ENCODE measurements at regions of chr13 and their contacts with region 1.

Region 1: DNA sequence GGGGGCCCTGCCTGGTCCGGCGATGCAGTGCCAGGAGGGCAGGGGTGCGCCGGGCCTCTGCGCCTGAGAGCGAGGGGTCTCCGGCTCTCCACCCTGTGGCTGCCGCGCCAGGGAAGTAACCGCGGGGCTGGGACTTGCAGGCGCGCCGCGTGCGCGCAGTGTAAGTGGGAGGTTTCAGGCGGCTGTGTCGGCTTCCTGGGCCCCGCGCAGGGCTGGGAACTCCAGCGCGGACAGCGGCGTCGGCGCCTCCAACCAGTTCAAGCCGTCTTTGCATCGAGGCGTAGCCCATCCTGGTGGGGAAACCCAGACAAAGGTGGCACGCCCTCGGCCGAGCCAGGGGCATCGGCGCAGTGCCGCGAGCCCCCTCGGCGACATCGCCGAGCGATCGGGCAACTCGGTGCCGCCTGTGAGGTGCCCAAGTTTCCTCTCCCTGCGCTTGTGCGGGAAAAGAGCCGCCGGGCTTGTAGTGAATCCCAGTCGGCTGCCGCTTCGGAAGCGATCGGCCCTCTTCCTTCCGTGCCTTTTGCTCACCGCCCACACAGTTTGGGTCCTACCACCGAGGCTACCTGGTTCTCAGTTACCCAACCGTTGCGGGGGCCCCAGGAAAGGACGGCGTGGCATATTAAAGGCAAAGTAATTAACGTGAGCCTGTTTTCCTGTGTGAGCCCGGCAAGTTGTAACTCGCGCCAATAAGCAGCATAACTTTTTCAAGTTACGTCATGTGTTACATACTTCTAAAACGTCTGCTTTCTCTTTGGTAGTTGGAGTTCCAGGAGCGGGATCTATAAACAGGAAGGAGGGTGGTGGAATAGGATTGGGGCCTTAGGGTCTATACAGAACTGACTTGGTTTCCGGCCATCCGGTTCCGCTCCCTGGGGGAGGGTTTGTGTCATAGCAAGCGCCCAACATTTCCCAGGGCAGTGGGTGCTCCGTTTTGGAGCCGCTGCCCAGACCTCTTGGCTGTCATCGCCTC is 1.2 kb downstream of the LRCH1 start:
- DNase-seq: peak; percentile 63
- H3K4me3 Mint-ChIP-seq: peak overlapping the region; percentile 91
- H3K27ac Mint-ChIP-seq: peak overlapping the region; percentile 68
- H3K4me1 Mint-ChIP-seq: peaks cover 40% of the 10 kb centered on the region
- H3K27me3 Mint-ChIP-seq: peaks cover 4% of the 10 kb centered on the region

Region 2: GRCh38 chr13:45149964-45150363 is 1404.2 kb before region 1 on chr13:
- intact Hi-C with region 1: no loop called
- DNase-seq: no peak
- H3K4me3 Mint-ChIP-seq: no peak overlapping the region
- H3K27ac Mint-ChIP-seq: no peak overlapping the region
- H3K4me1 Mint-ChIP-seq: peaks cover 10% of the 10 kb centered on the region
- H3K27me3 Mint-ChIP-seq: no peaks in the 10 kb centered on the region

Region 3: GRCh38 chr13:46577696-46578589 is 23.8 kb after region 1 on chr13:
- intact Hi-C with region 1: loop called (anchors 2 kb)
- DNase-seq: no peak
- H3K4me3 Mint-ChIP-seq: no peak overlapping the region
- H3K27ac Mint-ChIP-seq: peak overlapping the region; percentile 10
- H3K4me1 Mint-ChIP-seq: peaks cover 53% of the 10 kb centered on the region
- H3K27me3 Mint-ChIP-seq: no peaks in the 10 kb centered on the region

Region 4: GRCh38 chr13:46668302-46668720 is 114.1 kb after region 1 on chr13:
- intact Hi-C with region 1: loop called (anchors 2 kb)
- DNase-seq: no peak
- H3K4me3 Mint-ChIP-seq: peak overlapping the region; percentile 68
- H3K27ac Mint-ChIP-seq: peak overlapping the region; percentile 71
- H3K4me1 Mint-ChIP-seq: peaks cover 36% of the 10 kb centered on the region
- H3K27me3 Mint-ChIP-seq: no peaks in the 10 kb centered on the region

Region 5: DNA sequence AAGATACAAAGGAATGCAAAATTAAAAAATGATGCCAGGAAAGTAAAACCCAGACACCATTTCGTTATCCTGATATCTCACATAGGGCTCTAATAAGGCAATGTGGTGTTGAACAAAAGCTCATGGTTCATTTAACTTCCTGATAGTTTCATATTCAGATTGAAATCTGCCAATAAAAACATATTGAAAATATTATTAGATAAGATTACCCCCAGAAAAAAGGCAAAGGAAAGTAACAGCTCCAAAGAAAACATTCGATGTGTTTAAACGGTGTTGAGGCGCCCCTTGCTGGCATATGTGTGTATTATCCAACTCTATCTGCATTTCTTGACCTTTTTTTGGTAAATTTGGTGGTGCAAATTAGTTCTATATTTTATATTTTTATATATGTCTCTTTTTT is 166.9 kb after region 1 on chr13:
- intact Hi-C with region 1: loop called (anchors 1 kb)
- DNase-seq: no peak
- H3K4me3 Mint-ChIP-seq: no peak overlapping the region
- H3K27ac Mint-ChIP-seq: no peak overlapping the region
- H3K4me1 Mint-ChIP-seq: peaks cover 15% of the 10 kb centered on the region
- H3K27me3 Mint-ChIP-seq: no peaks in the 10 kb centered on the region

Region 6: GRCh38 chr13:46796515-46797474 is 242.6 kb after region 1 on chr13 and contains the start of gene ESD:
- intact Hi-C with region 1: loop called (anchors 2 kb)
- DNase-seq: peak; percentile 84
- H3K4me3 Mint-ChIP-seq: peak within 1 kb of the TSS; percentile 93
- H3K27ac Mint-ChIP-seq: peak within 1 kb of the TSS; percentile 94
- H3K4me1 Mint-ChIP-seq: peaks cover 31% of the 10 kb centered on the region
- H3K27me3 Mint-ChIP-seq: peaks cover 3% of the 10 kb centered on the region
- total RNA-seq, gene ESD: 125 and 126 TPM in 2 replicates

Region 7: DNA sequence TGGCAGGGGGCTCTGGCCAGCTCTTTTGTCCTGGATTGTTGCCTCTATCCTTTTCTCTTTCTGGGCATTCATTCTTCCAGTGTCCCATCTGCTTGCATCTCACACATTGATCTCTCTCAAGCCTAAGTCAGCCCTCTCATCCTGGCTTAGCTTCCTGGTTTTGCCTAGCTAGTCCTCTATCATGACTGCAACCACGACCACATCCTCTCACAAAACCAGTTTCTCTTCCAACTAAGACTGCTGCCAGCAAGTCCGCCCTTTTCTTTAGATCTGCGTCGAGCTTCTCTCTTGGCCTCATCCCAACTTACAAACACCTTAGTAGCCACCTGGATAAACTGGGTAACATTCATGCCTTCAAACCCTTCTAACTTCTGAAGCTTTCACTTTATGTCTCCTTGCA is 554.9 kb after region 1 on chr13:
- intact Hi-C with region 1: no loop called
- DNase-seq: no peak
- H3K4me3 Mint-ChIP-seq: no peak overlapping the region
- H3K27ac Mint-ChIP-seq: no peak overlapping the region
- H3K4me1 Mint-ChIP-seq: peaks cover 6% of the 10 kb centered on the region
- H3K27me3 Mint-ChIP-seq: no peaks in the 10 kb centered on the region

Measured in activated T-helper 2 cell treated with anti-CD3 and anti-CD28 coated beads, Interferon-gamma antibody, Interleukin-2, Interleukin-4, amounts not matched to agents 10 μg/mL and 5 μg/mL and 100 μg/mL, durations not matched to agents 14 hours and 24 hours and 36 hours (primary cell).